GM12878 (cell line): ENCODE measurements at regions of chr15 and their contacts with region 1.

Region 1: GRCh38 chr15:48963524-48964113 is at the start of gene SHC4:
- DNase-seq: no peak
- ATAC-seq: peak; percentile 34
- H3K4me3 ChIP-seq: peak within 1 kb of the TSS; percentile 54
- H3K27ac ChIP-seq: no peak within 1 kb of the TSS
- H3K4me1 ChIP-seq: no peaks in the 10 kb centered on the region; the same call in 1 of the 2 replicates
- H3K27me3 ChIP-seq: peaks cover 0 to 11% of the 10 kb centered on the region in 2 experiments; a peak in 2 of 4 replicates
- CTCF ChIP-seq: 0 out of 6 replicates have a peak, but pooled peaks of 1 of the 3 experiments have one; percentile 5
- EP300 ChIP-seq: no peak
- POLR2A ChIP-seq: no peak
- RAD21 ChIP-seq: no peak
- polyA plus RNA-seq, gene SHC4: 0.04 to 0.08 TPM

Region 2: DNA sequence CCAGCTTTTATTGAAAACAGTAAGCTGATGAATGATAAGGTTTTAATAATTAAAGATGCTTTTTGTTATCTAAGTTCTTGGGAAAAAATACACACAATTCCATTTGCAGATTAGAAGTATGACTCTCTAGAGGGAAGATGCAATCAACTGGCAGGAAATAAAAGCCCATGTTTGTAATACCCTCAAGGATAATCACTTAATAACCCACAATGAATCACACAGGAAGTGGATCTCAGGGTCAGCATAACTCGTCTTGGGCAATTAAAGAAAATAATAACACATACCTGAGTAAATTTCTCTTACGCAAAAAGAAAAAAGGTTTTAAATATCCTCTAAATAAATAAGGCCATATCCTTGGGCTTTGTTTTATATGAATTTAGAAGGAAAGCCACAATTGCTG is 95.1 kb before region 1 on chr15:
- CTCF ChIA-PET with region 1: interaction called, 129 read pairs
- POLR2A ChIA-PET with region 1: interaction called, 3 read pairs
- RAD21 ChIA-PET with region 1: interaction called, 8 read pairs
- SMC1A ChIA-PET with region 1: interaction called, 112 read pairs
- in situ Hi-C with region 1: no loop called
- intact Hi-C with region 1: no loop called
- DNase-seq: no peak
- ATAC-seq: no peak
- H3K4me3 ChIP-seq: no peak overlapping the region
- H3K27ac ChIP-seq: no peak overlapping the region
- H3K4me1 ChIP-seq: no peaks in the 10 kb centered on the region
- H3K27me3 ChIP-seq: no peaks in the 10 kb centered on the region; a peak in 1 of 4 replicates
- CTCF ChIP-seq: no peak
- EP300 ChIP-seq: no peak
- POLR2A ChIP-seq: no peak
- RAD21 ChIP-seq: no peak

Region 3: DNA sequence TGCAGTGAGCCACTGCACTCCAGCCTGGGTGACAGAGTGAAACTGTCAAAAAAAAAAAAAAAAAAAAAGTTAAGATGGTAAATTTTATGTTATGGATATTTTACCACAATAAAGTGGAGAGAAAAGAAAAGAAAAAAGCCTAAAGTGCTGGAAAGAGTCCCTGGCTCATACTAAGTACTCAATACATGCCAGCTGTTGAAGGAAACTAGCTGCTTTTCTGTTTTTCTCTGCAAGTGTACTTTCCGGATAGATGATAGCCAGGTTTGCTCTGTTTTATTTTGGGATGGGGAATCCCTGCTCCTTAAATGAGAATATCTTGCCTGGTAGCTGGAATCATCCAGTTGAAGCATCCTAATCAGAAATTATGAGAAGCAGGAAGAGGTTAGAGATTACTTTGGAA is 74.8 kb before region 1 on chr15:
- CTCF ChIA-PET with region 1: interaction called, 21 read pairs
- POLR2A ChIA-PET with region 1: no interaction called
- RAD21 ChIA-PET with region 1: interaction called, 4 read pairs
- SMC1A ChIA-PET with region 1: interaction called, 11 read pairs
- in situ Hi-C with region 1: no loop called
- intact Hi-C with region 1: loop called (anchors 5 kb)
- DNase-seq: no peak
- ATAC-seq: no peak
- H3K4me3 ChIP-seq: no peak overlapping the region
- H3K27ac ChIP-seq: no peak overlapping the region
- H3K4me1 ChIP-seq: no peaks in the 10 kb centered on the region
- H3K27me3 ChIP-seq: no peaks in the 10 kb centered on the region
- CTCF ChIP-seq: no peak
- EP300 ChIP-seq: no peak
- POLR2A ChIP-seq: no peak
- RAD21 ChIP-seq: no peak

Region 4: GRCh38 chr15:48946088-48946839 is 17.4 kb before region 1 on chr15:
- CTCF ChIA-PET with region 1: interaction called, 26 read pairs
- POLR2A ChIA-PET with region 1: no interaction called
- RAD21 ChIA-PET with region 1: interaction called, 25 read pairs
- SMC1A ChIA-PET with region 1: interaction called, 40 read pairs
- in situ Hi-C with region 1: no loop called
- intact Hi-C with region 1: no loop called
- DNase-seq: no peak
- ATAC-seq: peak; percentile 78
- H3K4me3 ChIP-seq: no peak overlapping the region
- H3K27ac ChIP-seq: no peak overlapping the region
- H3K4me1 ChIP-seq: no peaks in the 10 kb centered on the region
- H3K27me3 ChIP-seq: no peaks in the 10 kb centered on the region
- CTCF ChIP-seq: no peak
- EP300 ChIP-seq: no peak
- POLR2A ChIP-seq: no peak
- RAD21 ChIP-seq: no peak

Region 5: GRCh38 chr15:49145651-49146609 is 182.3 kb after region 1 on chr15:
- CTCF ChIA-PET with region 1: interaction called, 18 read pairs
- POLR2A ChIA-PET with region 1: no interaction called
- RAD21 ChIA-PET with region 1: interaction called, 9 read pairs
- SMC1A ChIA-PET with region 1: interaction called, 9 read pairs
- in situ Hi-C with region 1: no loop called
- intact Hi-C with region 1: no loop called
- DNase-seq: no peak
- ATAC-seq: peak; percentile 75
- H3K4me3 ChIP-seq: no peak overlapping the region
- H3K27ac ChIP-seq: no peak overlapping the region
- H3K4me1 ChIP-seq: no peaks in the 10 kb centered on the region
- H3K27me3 ChIP-seq: no peaks in the 10 kb centered on the region
- CTCF ChIP-seq: peak; percentile 59 to 64 (median 63); a peak in 5 of 6 replicates
- EP300 ChIP-seq: no peak
- POLR2A ChIP-seq: no peak
- RAD21 ChIP-seq: peak; percentile 57